ENCODE measurements at regions of chr3 and their contacts with region 1.

Region 1: DNA sequence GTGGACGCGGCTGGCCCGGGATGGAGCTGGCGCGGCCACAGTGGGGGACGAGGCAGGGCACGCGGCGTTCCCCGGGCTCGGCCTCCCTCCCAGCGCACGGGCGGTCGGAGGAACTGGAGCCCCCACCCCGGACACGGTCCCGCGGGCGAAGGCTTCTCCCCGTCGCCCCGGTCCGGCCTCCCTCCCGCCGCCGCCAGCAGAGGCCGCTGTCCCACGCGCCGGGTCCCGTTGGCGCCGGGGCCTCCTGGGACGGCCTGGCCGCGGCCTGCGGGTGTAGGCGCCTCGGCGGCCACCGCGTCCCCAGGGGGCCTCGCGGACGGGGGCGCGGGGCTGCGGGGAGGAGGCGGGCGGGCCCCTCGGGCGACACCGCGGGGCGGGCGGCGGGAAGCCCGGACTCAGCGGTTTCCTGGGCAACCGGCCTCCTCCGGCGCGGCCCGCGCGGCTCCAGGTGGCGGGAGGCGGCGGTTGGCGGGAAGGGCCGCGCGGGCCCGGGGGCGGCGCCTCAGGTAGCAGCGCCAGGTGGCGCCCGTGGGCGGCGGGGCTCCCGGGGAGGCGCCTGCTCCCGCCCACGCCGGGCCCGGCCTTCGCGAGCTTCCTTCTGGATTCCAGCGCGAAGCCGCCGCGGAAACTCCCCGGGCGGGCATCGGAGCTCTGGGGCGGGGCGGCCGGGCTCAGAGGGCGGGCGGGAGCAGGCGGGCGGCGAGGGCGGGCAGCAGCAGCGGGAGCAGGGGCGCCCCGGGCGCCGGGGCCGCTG is 26.7 kb downstream of the MELTF start:
- DNase-seq: peak; percentile 94
- ATAC-seq: peak; percentile 79
- H3K4me3 Mint-ChIP-seq: no peak overlapping the region
- H3K27ac Mint-ChIP-seq: no peak overlapping the region
- H3K4me1 Mint-ChIP-seq: peaks cover 11% of the 10 kb centered on the region
- H3K27me3 Mint-ChIP-seq: peaks cover 7% of the 10 kb centered on the region
- CTCF ChIP-seq: no peak

Region 2: GRCh38 chr3:196774191-196774820 is 228.6 kb before region 1 on chr3:
- CTCF ChIA-PET with region 1: no interaction called
- POLR2A ChIA-PET with region 1: no interaction called
- intact Hi-C with region 1: no loop called
- DNase-seq: no peak
- ATAC-seq: no peak
- H3K4me3 Mint-ChIP-seq: no peak overlapping the region
- H3K27ac Mint-ChIP-seq: no peak overlapping the region
- H3K4me1 Mint-ChIP-seq: peaks cover 71% of the 10 kb centered on the region
- H3K27me3 Mint-ChIP-seq: no peaks in the 10 kb centered on the region
- CTCF ChIP-seq: no peak

Region 3: DNA sequence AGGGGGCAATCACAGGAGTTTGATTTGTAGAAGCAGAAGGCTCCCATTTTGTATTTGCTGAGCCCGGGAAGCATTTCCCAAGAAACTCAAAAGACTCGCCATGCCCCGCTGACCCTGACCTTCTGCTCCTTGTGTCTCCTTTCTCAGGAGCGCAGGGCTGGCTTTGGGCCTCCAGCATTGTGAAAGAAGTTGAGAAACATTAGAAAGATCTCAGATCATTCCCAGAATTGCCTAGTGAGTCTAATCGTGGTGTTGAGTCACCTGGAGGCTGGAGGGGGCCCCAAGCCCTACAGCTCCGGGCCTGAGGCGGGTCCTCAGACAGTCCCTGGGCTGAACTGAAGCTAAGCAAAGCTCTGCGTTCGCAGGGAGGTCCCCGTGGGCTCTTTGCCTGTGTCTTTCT is 23.3 kb before region 1 on chr3:
- CTCF ChIA-PET with region 1: no interaction called
- POLR2A ChIA-PET with region 1: no interaction called
- intact Hi-C with region 1: loop called (anchors 2 kb)
- DNase-seq: no peak
- ATAC-seq: no peak
- H3K4me3 Mint-ChIP-seq: no peak overlapping the region
- H3K27ac Mint-ChIP-seq: no peak overlapping the region
- H3K4me1 Mint-ChIP-seq: peaks cover 11% of the 10 kb centered on the region
- H3K27me3 Mint-ChIP-seq: peaks cover 21% of the 10 kb centered on the region
- CTCF ChIP-seq: no peak

Region 4: GRCh38 chr3:197023241-197023997 is 20.5 kb after region 1 on chr3:
- CTCF ChIA-PET with region 1: interaction called, 78 read pairs
- POLR2A ChIA-PET with region 1: interaction called, 91 read pairs
- intact Hi-C with region 1: loop called (anchors 1 kb)
- DNase-seq: peak; percentile 70
- ATAC-seq: peak; percentile 79
- H3K4me3 Mint-ChIP-seq: peak overlapping the region; percentile 75
- H3K27ac Mint-ChIP-seq: peak overlapping the region; percentile 96
- H3K4me1 Mint-ChIP-seq: peaks cover 41% of the 10 kb centered on the region
- H3K27me3 Mint-ChIP-seq: peaks cover 9% of the 10 kb centered on the region
- CTCF ChIP-seq: no peak

Region 5: DNA sequence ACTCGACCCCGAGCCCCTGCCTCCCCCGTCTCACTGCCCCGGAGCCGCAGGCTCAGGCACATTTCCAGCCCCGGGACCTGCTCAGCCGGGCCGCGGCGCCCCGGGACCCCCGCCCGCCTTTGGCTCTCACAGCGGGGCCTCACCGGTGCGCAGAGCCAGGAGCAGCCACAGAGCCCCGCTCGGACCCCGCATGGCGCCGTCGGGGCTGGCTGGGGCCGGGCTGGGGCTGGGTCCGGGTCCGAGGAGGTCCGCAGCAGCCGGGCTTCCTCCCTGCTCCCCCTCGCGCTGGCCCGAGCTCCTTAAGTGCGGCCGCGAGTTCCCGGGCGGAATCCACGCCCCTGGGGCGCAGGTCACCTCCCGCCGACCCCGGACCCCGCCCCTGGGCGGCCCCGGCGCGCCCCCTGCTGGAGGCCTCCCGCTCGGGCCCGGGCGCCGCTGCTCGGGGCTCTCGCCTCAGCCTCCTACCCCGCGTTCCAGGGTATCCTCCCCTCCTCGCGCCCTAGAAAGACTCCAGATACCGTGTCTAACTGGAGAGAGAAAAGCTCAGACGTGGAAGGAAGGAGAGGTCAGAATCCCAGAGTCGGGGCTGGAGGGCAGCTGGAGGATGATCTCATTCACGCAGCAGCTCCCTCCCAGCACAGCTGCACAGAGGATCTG is 26.8 kb after region 1 on chr3 and contains the start of gene MELTF:
- CTCF ChIA-PET with region 1: interaction called, 78 read pairs
- POLR2A ChIA-PET with region 1: interaction called, 91 read pairs
- intact Hi-C with region 1: loop called (anchors 1 kb)
- DNase-seq: peak; percentile 83
- ATAC-seq: peak; percentile 73
- H3K4me3 Mint-ChIP-seq: peak within 1 kb of the TSS; percentile 82
- H3K27ac Mint-ChIP-seq: peak within 1 kb of the TSS; percentile 56
- H3K4me1 Mint-ChIP-seq: peaks cover 23% of the 10 kb centered on the region
- H3K27me3 Mint-ChIP-seq: peaks cover 24% of the 10 kb centered on the region
- CTCF ChIP-seq: peak; percentile 93
- total RNA-seq, gene MELTF: 50.0 and 61.5 TPM in 2 replicates

Region 6: DNA sequence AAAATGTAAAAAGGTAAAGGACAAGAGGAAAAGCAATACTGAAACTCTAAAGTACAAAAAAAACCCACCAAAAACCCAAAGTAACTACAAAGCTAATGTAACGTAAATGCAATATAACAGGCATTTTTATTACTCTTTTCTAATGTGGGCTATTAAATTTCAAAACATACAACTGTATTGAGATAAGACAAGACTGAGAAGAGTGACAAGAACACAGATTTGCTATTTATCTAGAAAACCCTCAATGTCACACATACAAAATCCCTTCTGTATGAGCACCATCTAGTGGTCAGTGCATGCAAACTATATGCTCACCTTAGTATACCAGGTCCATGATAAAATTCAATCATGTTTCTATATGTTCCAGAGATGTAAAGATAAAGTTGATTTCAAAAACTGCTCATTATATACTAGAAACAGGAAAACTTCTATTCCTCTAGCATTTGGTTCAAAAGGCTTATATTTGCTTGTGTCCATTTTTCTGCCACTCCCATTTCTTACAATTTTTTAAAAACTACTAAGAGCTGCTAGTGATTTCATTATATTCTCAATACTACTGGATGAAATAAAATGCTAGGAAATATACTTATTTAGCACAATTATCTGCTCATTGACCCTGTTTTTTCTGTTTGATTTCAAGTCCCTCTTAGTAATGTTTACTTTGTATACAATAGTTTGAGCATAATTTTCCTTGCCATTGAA is 184.2 kb after region 1 on chr3:
- CTCF ChIA-PET with region 1: interaction called, 8 read pairs
- POLR2A ChIA-PET with region 1: interaction called, 3 read pairs
- intact Hi-C with region 1: loop called (anchors 1 kb)
- DNase-seq: no peak
- ATAC-seq: peak; percentile 61
- H3K4me3 Mint-ChIP-seq: no peak overlapping the region
- H3K27ac Mint-ChIP-seq: no peak overlapping the region
- H3K4me1 Mint-ChIP-seq: peaks cover 4% of the 10 kb centered on the region
- H3K27me3 Mint-ChIP-seq: no peaks in the 10 kb centered on the region
- CTCF ChIP-seq: no peak